Dendritic cell treated with granulocyte-macrophage colony-stimulating factor and Interleukin-4, amounts not matched to agents 40 ng/mL and 50 ng/mL, for 4 days (primary cell): ENCODE measurements at regions of chr10 and their contacts with region 1.

Region 1: DNA sequence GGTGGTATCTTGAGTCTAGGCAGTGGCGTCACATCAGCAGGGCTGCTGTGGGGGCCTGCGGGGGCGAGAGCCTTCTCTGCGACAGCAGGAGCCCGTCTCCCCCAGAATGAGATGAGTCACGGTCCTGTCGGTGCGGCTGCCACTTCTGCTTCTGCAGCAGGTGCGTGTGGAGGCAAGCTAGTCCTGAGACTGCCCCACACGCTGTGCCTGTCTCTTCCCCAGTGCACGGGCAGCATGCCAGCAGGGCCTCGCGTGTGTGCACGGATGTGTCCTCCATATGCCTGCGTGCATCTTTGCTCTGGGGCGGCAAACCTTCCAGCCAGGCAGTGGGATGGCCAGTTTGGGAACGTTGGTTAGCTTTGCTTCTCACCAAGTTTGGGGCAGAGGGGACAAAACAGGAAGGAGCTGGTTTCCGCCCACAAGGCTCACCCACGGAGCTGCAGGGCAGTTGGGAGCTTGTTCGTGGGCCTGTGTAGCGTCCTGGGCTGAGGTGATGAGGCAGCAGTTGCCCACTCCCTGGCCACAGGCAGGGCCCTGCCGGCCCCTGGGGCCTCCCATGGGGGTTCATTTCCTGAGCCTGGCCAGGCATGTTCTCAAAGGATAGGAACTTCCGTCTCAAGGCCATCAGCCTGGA is 60.8 kb upstream of the PPIF start:
- H3K4me3 Mint-ChIP-seq: peak overlapping the region; percentile 60
- H3K27ac Mint-ChIP-seq: peak overlapping the region; percentile 91
- H3K4me1 Mint-ChIP-seq: peaks cover 100% of the 10 kb centered on the region
- H3K27me3 Mint-ChIP-seq: no peaks in the 10 kb centered on the region

Region 2: DNA sequence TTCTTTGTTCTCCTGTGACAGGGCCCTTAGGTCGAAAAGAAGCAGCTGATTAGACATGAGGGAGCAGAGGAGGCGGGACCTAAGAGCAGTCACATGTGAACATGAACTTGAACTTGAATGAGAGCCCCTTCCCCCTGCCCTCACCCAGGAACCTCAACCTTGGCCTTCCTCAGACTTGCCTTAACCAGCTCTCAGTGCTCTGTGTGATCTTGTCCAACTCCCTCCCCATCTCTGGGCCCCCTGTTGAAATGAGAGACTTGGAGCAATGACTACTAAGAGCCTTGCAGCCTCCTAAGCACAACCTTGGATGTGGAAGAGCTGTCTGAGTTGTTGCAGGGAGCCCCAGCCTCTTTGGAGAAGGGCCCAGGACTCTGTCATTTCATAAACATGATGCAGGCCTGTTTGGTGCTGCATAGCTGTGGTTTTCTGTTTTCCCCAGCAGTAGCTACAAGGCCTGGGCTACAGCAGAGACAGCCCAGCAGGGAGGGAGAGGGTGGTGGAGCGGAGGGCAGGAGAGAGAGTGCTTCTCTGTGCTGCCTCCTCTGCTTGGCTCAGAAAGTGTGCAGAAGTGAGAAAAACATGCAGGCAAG is 341.6 kb before region 1 on chr10:
- intact Hi-C with region 1: no loop called
- H3K4me3 Mint-ChIP-seq: no peak overlapping the region
- H3K27ac Mint-ChIP-seq: no peak overlapping the region
- H3K4me1 Mint-ChIP-seq: no peaks in the 10 kb centered on the region
- H3K27me3 Mint-ChIP-seq: peaks cover 16% of the 10 kb centered on the region

Region 3: GRCh38 chr10:79266543-79267312 is 19.7 kb before region 1 on chr10:
- intact Hi-C with region 1: loop called (anchors 2 kb)
- H3K4me3 Mint-ChIP-seq: peak overlapping the region; percentile 57
- H3K27ac Mint-ChIP-seq: peak overlapping the region; percentile 91
- H3K4me1 Mint-ChIP-seq: peaks cover 99% of the 10 kb centered on the region
- H3K27me3 Mint-ChIP-seq: no peaks in the 10 kb centered on the region

Region 4: GRCh38 chr10:79310911-79311573 is 24.6 kb after region 1 on chr10:
- intact Hi-C with region 1: no loop called
- H3K4me3 Mint-ChIP-seq: no peak overlapping the region
- H3K27ac Mint-ChIP-seq: no peak overlapping the region
- H3K4me1 Mint-ChIP-seq: peaks cover 35% of the 10 kb centered on the region
- H3K27me3 Mint-ChIP-seq: no peaks in the 10 kb centered on the region